Astrocyte of the cerebellum (primary cell): ENCODE measurements at regions of chr6 and their contacts with region 1.

Region 1: GRCh38 chr6:70520575-70520974 is 46.2 kb upstream of the SDHAF4 start:
- DNase-seq: no peak
- H3K4me3 ChIP-seq: no peak overlapping the region
- CTCF ChIP-seq: peak; percentile 32

Region 2: GRCh38 chr6:70282312-70282918 is 238.2 kb before region 1 on chr6:
- in situ Hi-C with region 1: no loop called
- DNase-seq: no peak
- H3K4me3 ChIP-seq: no peak overlapping the region
- CTCF ChIP-seq: no peak

Region 3: GRCh38 chr6:70686548-70687133 is 166.1 kb after region 1 on chr6:
- in situ Hi-C with region 1: loop called (anchors 25 kb)
- DNase-seq: peak; percentile 20
- H3K4me3 ChIP-seq: no peak overlapping the region
- CTCF ChIP-seq: peak; percentile 24